Prostate gland (tissue), 2 donors: ENCODE measurements at regions of chr2 and their contacts with region 1.

Region 1: GRCh38 chr2:236507393-236508085 is 62.1 kb upstream of the ACKR3 start:
- DNase-seq: peak; percentile 55
- H3K4me3 ChIP-seq: peak overlapping the region; percentile 28 to 35
- H3K27ac ChIP-seq: no peak overlapping the region
- H3K4me1 ChIP-seq: no peaks in the 10 kb centered on the region
- H3K27me3 ChIP-seq: no peaks in the 10 kb centered on the region
- CTCF ChIP-seq: no peak
- POLR2A ChIP-seq: no peak

Region 2: GRCh38 chr2:236298924-236299475 is 208.5 kb before region 1 on chr2:
- intact Hi-C with region 1: no loop called
- DNase-seq: no peak
- H3K4me3 ChIP-seq: no peak overlapping the region
- H3K27ac ChIP-seq: no peak overlapping the region
- H3K4me1 ChIP-seq: no peaks in the 10 kb centered on the region
- H3K27me3 ChIP-seq: no peaks in the 10 kb centered on the region
- CTCF ChIP-seq: no peak
- POLR2A ChIP-seq: no peak

Region 3: DNA sequence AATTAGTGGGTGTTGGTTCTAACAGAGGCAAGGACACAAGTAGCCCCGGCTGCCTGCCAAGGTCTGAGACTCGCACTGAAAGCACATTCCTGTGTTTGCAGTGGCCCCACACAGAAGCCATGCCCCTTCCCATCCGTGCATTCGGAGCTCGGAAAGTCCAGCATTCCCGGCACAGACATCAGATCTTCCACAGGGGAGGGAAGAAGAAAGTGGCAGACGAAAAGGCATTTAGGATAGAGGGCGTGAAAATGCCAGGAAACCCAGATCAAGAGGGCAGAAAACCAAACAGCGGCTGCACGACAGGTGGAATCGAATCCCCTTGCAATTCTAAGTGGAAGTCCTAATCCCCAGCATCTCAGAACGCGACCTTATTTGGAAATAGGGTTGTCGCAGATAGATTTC is 137.9 kb before region 1 on chr2:
- intact Hi-C with region 1: loop called (anchors 10 kb)
- DNase-seq: no peak
- H3K4me3 ChIP-seq: no peak overlapping the region
- H3K27ac ChIP-seq: no peak overlapping the region
- H3K4me1 ChIP-seq: no peaks in the 10 kb centered on the region
- H3K27me3 ChIP-seq: no peaks in the 10 kb centered on the region
- CTCF ChIP-seq: no peak
- POLR2A ChIP-seq: no peak

Region 4: DNA sequence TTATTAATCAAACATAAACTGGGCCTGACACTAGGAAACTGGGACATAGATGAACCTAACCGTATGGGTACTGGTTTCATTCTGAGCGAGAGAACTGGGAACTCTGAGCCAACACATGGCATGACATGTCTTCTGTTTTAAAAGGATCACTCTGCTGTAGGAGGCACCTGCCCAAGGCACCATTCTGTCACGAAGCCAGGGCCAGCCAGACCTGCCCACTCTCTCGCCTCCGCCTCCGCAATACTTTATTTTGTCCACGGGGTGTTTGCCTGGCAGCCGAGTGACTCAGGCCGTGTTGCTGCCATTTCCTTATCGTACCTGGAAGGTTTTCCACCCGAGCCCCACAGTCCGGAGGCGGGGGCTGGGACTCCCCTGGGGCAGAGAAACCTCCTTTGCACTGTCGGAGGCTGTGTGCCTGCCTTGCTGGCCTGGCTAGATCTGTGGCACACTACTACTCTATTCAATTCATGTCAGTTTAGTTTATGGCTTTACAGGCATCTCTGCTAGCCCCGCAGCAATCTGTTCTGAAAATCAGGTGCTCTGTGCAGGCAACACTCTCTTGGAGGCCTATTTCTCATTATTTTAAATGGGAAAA is 58.3 kb before region 1 on chr2:
- intact Hi-C with region 1: no loop called
- DNase-seq: peak; percentile 83
- H3K4me3 ChIP-seq: peak overlapping the region in 1 of 2 donors; percentile 2
- H3K27ac ChIP-seq: peak overlapping the region; percentile 6 to 57
- H3K4me1 ChIP-seq: no peaks in the 10 kb centered on the region
- H3K27me3 ChIP-seq: no peaks in the 10 kb centered on the region
- CTCF ChIP-seq: peak in 1 of 4 experiments; percentile 11
- POLR2A ChIP-seq: no peak

Region 5: GRCh38 chr2:236679884-236680860 is 172.6 kb after region 1 on chr2:
- intact Hi-C with region 1: no loop called
- DNase-seq: peak; percentile 84
- H3K4me3 ChIP-seq: no peak overlapping the region
- H3K27ac ChIP-seq: peak overlapping the region in 1 of 2 donors; percentile 47
- H3K4me1 ChIP-seq: peaks cover 5% of the 10 kb centered on the region
- H3K27me3 ChIP-seq: no peaks in the 10 kb centered on the region
- CTCF ChIP-seq: no peak
- POLR2A ChIP-seq: no peak